ENCODE measurements at regions of chr11 and their contacts with region 1.

Region 1: GRCh38 chr11:111860257-111860656 is 11.1 kb downstream of the ALG9 start:
- DNase-seq: no peak
- H3K4me3 ChIP-seq: no peak overlapping the region
- H3K27ac ChIP-seq: no peak overlapping the region
- H3K4me1 ChIP-seq: no peaks in the 10 kb centered on the region
- H3K27me3 ChIP-seq: no peaks in the 10 kb centered on the region
- CTCF ChIP-seq: no peak
- EP300 ChIP-seq: no peak
- RAD21 ChIP-seq: no peak

Region 2: GRCh38 chr11:111741751-111742150 is 118.5 kb before region 1 on chr11:
- CTCF ChIA-PET with region 1: no interaction called
- POLR2A ChIA-PET with region 1: no interaction called
- DNase-seq: no peak
- H3K4me3 ChIP-seq: no peak overlapping the region
- H3K27ac ChIP-seq: no peak overlapping the region
- H3K4me1 ChIP-seq: peaks cover 1 to 14% of the 10 kb centered on the region in 2 experiments; a peak in 3 of 4 replicates
- H3K27me3 ChIP-seq: no peaks in the 10 kb centered on the region
- CTCF ChIP-seq: no peak
- EP300 ChIP-seq: no peak
- RAD21 ChIP-seq: no peak

Region 3: GRCh38 chr11:111819161-111819828 is 41.0 kb before region 1 on chr11:
- CTCF ChIA-PET with region 1: no interaction called
- POLR2A ChIA-PET with region 1: no interaction called
- DNase-seq: peak; percentile 26
- H3K4me3 ChIP-seq: no peak overlapping the region
- H3K27ac ChIP-seq: peak overlapping the region; percentile 75 to 83
- H3K4me1 ChIP-seq: peaks cover 16 to 20% of the 10 kb centered on the region in 2 experiments
- H3K27me3 ChIP-seq: no peaks in the 10 kb centered on the region
- CTCF ChIP-seq: no peak
- EP300 ChIP-seq: peak; percentile 10 to 71; a peak in 3 of 4 replicates
- RAD21 ChIP-seq: no peak

Region 4: DNA sequence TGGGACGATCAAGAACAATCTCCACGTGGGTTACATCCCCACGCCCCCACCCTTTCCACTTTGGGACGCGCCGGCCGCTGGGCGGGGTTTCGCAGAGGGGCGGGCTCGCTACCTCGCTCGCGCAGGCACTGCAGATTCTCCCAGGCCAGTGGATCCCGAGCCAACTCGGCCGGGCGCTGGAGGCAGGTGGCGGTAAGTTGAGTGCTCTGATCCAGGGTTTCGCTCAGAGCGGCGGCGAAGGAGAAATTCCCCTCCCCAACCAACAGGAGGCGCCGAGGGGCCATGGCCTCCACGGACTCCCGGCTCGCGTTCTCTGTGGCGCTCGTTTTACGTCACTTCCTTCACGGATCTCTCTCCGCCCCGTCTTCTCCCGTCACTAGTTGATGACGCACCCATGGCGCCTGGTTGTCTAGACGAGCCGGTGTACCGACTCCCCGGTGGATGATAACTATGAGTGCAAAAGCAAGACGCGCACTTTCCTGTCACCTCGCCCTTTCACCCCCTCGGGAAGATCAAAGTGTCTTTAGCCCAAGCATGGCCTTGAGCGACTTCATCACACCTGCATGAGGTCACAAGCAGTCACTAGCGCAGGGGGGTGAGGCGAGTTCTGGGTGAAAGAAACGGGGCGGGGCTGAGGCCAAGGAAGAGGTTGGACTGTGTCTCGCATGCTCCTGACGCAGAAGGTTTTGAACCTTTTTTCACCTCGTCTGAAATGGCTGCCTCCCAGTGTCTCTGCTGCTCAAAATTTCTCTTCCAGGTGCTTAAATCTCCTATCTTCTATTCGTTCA is 18.8 kb after region 1 on chr11 and contains the starts of genes CFAP68 and FDXACB1:
- CTCF ChIA-PET with region 1: no interaction called
- POLR2A ChIA-PET with region 1: no interaction called
- DNase-seq: peak; percentile 93
- H3K4me3 ChIP-seq: peak within 1 kb of the TSS; percentile 72 to 84
- H3K27ac ChIP-seq: peak within 1 kb of the TSS; percentile 86 to 98
- H3K4me1 ChIP-seq: peaks cover 0 to 8% of the 10 kb centered on the region in 2 experiments; a peak in 2 of 4 replicates
- H3K27me3 ChIP-seq: no peaks in the 10 kb centered on the region
- CTCF ChIP-seq: peak; percentile 91
- EP300 ChIP-seq: peak in 1 of 2 experiments; percentile 21; a peak in 1 of 4 replicates
- RAD21 ChIP-seq: peak; percentile 77
- polyA plus RNA-seq, gene CFAP68: 36.7 and 61.2 TPM in 2 replicates
- polyA plus RNA-seq, gene FDXACB1: 2.8 and 3.2 TPM in 2 replicates

Region 5: GRCh38 chr11:111976767-111977145 is 116.5 kb after region 1 on chr11:
- CTCF ChIA-PET with region 1: interaction called, 3 read pairs
- POLR2A ChIA-PET with region 1: interaction called, 10 read pairs
- DNase-seq: no peak
- H3K4me3 ChIP-seq: no peak overlapping the region
- H3K27ac ChIP-seq: no peak overlapping the region
- H3K4me1 ChIP-seq: peaks cover 13 to 18% of the 10 kb centered on the region in 2 experiments; a peak in 3 of 4 replicates
- H3K27me3 ChIP-seq: no peaks in the 10 kb centered on the region
- CTCF ChIP-seq: no peak
- EP300 ChIP-seq: no peak
- RAD21 ChIP-seq: no peak

Region 6: GRCh38 chr11:112310419-112310818 is 450.2 kb after region 1 on chr11:
- CTCF ChIA-PET with region 1: no interaction called
- POLR2A ChIA-PET with region 1: no interaction called
- DNase-seq: no peak
- H3K4me3 ChIP-seq: no peak overlapping the region
- H3K27ac ChIP-seq: no peak overlapping the region
- H3K4me1 ChIP-seq: no peaks in the 10 kb centered on the region; a peak in 2 of 4 replicates
- H3K27me3 ChIP-seq: no peaks in the 10 kb centered on the region
- CTCF ChIP-seq: no peak
- EP300 ChIP-seq: no peak
- RAD21 ChIP-seq: no peak

Measured in SK-N-SH (cell line).